Posterior cingulate gyrus (tissue), 11 donors: ENCODE measurements at regions of chr7 and their contacts with region 1.

Region 1: GRCh38 chr7:129367700-129368388 is 66.4 kb upstream of the STRIP2 start:
- DNase-seq: peak; percentile 61 to 95 (median 80)

Region 2: DNA sequence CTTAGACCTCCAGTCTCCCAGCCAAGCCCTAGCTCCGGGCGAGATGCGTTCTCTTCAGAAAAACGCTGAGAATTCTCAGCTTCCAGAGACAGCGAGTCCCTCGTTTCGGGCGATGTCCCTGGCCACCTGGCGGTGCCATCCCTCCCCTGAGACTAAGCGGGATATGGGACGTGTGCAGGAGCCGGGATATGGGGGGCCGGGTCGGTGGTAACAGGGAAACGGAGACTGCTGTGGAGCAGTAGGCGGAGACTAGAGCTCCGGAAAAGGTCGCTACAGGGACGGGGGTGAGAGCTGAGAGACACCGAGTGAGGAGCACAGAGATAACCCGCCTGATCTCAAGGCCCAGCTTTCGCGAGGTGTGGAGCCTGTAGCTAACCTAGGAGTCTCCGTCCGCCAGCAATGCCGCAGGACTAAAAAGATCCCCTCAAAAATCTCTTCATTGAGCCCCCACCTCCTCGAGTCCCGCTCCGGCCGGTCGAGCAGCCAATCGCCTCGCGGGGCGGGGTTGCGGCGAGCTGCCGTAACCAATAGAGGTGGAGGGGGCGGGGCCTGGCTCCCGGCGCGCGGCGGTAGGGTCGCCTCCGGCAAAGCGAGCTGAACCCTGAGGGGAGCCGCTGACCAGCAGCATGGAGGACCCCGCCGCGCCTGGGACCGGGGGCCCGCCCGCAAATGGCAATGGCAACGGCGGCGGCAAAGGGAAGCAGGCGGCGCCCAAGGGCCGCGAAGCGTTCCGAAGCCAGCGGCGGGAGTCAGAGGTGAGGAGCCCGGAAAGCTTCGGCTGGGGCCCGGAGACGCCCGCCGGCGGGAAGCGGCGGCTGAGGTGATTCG is 66.2 kb after region 1 on chr7 and contains the start of gene STRIP2:
- intact Hi-C with region 1: loop called (anchors 5 kb)
- DNase-seq: peak; percentile 89 to 99 (median 94)

Region 3: GRCh38 chr7:129468087-129468486 is 100.2 kb after region 1 on chr7:
- intact Hi-C with region 1: loop called (anchors 2 kb)
- DNase-seq: no peak

Region 4: GRCh38 chr7:129644634-129645230 is 276.9 kb after region 1 on chr7:
- intact Hi-C with region 1: loop called (anchors 5 kb)
- DNase-seq: no peak